ENCODE measurements at regions of chr2 and their contacts with region 1.

Region 1: DNA sequence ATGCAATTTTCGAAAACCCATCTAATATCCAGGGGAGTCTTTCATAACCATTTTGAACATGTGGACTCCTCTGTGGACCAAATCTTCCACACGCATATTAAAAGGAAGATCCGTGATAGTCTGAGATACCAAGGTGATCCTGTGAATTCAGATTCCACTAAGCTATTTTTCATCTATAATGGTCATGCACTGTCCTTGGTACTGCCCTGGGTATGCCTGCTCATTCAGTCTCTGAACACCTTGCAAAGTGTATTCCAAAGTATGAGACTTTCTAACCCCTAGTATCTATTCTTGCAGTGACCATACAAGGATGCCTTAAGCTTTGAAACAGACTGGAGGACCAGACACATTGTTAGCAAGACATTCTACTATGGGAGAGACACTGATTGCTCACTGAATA is 217.6 kb upstream of the CCDC150 start:
- DNase-seq: no peak
- ATAC-seq: no peak
- H3K4me3 ChIP-seq: no peak overlapping the region
- H3K27ac ChIP-seq: no peak overlapping the region
- H3K4me1 ChIP-seq: no peaks in the 10 kb centered on the region
- H3K27me3 ChIP-seq: no peaks in the 10 kb centered on the region
- CTCF ChIP-seq: no peak
- EP300 ChIP-seq: no peak
- POLR2A ChIP-seq: no peak
- RAD21 ChIP-seq: no peak

Region 2: DNA sequence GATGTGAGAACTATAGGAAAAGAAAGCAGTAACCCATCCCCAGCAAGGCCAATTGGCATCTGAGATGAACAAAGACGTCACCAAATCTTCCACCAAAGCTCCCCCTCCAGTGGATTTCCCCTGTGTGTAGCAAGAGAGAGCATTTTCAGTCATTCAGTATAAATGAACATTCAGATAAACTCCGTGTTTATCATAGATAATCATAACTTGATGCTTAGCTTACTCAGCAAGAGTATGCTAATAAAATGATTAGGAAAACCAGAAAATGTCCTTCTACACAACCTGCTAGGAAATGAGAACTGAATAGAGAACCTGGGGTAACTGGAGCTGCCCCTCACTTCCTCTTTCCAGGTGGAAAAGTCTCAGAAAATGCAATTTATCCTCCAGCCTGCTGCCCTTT is 19.6 kb after region 1 on chr2:
- CTCF ChIA-PET with region 1: interaction called, 4 read pairs
- POLR2A ChIA-PET with region 1: interaction called, 3 read pairs
- RAD21 ChIA-PET with region 1: interaction called, 3 read pairs
- SMC1A ChIA-PET with region 1: interaction called, 10 read pairs
- in situ Hi-C with region 1: no loop called
- intact Hi-C with region 1: no loop called
- DNase-seq: no peak
- ATAC-seq: peak; percentile 85
- H3K4me3 ChIP-seq: no peak overlapping the region
- H3K27ac ChIP-seq: peak overlapping the region; percentile 54; the same call in 1 of the 2 replicates
- H3K4me1 ChIP-seq: peaks cover 22% of the 10 kb centered on the region
- H3K27me3 ChIP-seq: no peaks in the 10 kb centered on the region
- CTCF ChIP-seq: no peak
- EP300 ChIP-seq: 0 out of 4 replicates have a peak, but pooled peaks of 1 of the 2 experiments have one; percentile 34
- POLR2A ChIP-seq: no peak
- RAD21 ChIP-seq: 0 out of 2 replicates have a peak, but pooled peaks have one; percentile 11

Measured in GM12878 (cell line).